GM23248 (cell line): ENCODE measurements at regions of chr5 and their contacts with region 1.

Region 1: DNA sequence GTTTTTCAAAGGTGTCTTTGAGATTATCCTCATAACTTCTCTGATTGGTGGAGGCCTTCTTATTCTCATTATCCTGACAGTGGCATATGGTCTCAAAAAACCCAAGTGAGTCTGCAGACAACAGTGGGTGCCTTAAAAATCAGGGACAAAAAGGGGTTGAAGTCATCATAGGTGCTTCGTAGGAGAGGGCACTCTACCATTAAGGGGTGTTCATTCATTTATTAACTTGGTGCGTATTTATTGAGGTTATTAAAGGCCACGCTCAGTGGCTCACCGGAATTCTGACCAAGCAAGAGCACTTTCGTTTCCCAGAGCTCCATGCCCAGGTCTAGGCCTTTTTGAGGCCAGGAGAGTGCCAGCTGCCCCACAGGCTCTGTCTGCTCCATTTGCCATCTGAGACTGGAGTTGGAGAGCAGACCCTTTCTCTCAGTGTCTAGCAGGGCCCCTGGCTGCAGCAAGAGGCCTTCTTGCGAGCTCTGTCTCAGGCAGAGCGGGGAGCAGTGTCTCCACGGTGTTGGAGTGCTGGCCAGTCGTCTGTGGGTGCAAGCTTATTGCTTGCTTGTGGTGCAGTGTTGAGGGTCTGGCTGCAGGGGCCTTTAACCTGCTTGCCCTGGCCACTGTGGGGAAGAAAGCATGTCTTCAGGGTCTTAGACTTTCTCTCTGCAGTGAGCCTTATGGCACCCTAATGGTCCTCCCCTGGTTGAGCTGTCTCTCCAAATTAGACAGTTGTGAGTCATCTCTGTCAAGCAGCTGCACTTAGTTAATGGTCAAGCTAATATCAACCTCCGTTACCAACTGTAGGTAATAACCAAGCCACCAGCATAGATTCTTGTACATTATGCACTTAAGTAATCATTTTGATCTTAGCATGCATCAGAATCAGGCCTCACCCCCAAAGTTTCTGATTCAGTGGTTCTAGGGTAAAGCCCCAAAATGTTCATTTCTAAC is 62.6 kb downstream of the IL31RA start:
- DNase-seq: peak; percentile 27
- H3K4me3 ChIP-seq: no peak overlapping the region
- H3K27ac ChIP-seq: no peak overlapping the region
- H3K4me1 ChIP-seq: peaks cover 11% of the 10 kb centered on the region
- H3K27me3 ChIP-seq: no peaks in the 10 kb centered on the region

Region 2: DNA sequence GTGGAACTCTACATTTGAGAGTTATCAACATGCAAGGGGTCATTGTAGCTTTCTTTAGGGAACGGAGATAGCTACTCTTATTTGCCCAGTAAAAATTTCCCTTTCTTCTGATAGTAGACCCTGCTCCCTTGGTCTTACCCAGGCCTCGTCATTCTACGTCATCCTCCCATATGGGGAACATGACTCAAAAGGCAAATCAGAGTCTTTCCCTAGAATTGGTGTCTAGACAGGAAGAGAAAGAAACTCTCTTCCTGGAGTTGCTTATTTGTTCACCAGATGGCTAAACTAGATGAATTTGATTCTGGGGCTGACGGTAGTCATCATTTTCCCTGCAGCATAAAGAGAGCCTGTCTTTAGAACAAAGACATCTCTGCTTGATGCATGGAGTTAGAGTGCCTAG is 189.5 kb before region 1 on chr5:
- in situ Hi-C with region 1: loop called (anchors 10 kb)
- DNase-seq: peak; percentile 11
- H3K4me3 ChIP-seq: no peak overlapping the region
- H3K27ac ChIP-seq: no peak overlapping the region
- H3K4me1 ChIP-seq: no peaks in the 10 kb centered on the region
- H3K27me3 ChIP-seq: no peaks in the 10 kb centered on the region